Right ventricle myocardium inferior (tissue), 1 donor: ENCODE measurements at regions of chr3 and their contacts with region 1.

Region 1: DNA sequence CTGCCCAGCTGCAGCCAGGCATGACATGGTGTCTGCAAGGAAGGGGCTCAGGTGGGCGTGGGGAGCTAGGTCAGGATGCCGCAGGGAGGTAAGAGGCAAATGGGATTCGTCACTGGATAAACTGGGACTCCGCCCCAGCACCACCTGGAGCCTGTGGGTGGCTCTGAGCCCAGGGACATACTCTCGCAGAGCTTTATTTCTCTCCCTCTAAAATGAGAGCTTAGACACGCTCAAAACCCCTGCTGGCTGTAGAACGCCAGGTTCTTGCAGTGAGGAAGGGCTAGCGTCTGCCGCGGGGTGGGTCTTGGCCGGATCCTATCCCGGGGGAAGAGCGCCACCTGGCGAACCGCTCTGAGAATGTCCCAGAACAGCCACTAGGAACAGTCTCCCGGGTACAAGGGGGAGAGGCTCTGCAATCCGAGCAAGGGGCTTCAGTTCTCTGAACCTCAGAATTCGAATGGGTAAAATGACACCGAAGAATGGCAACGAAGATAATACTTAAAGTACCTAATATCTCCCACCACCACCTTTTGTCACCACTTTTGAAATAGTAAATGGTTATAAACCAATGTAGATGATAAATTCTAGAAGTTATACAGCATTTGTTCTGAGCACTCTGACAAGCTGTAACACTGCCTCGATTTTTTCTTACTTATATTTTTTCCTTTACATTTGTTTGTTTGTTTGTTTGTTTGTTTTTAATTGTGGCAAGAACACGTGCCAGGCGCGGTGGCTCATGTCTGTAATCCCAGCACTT is 53.2 kb upstream of the SRGAP3 start:
- DNase-seq: peak; percentile 88
- ATAC-seq: peak; percentile 94

Region 2: GRCh38 chr3:8970971-8971589 is 331.5 kb before region 1 on chr3:
- intact Hi-C with region 1: loop called (anchors 1 kb)
- DNase-seq: no peak
- ATAC-seq: peak; percentile 59

Region 3: DNA sequence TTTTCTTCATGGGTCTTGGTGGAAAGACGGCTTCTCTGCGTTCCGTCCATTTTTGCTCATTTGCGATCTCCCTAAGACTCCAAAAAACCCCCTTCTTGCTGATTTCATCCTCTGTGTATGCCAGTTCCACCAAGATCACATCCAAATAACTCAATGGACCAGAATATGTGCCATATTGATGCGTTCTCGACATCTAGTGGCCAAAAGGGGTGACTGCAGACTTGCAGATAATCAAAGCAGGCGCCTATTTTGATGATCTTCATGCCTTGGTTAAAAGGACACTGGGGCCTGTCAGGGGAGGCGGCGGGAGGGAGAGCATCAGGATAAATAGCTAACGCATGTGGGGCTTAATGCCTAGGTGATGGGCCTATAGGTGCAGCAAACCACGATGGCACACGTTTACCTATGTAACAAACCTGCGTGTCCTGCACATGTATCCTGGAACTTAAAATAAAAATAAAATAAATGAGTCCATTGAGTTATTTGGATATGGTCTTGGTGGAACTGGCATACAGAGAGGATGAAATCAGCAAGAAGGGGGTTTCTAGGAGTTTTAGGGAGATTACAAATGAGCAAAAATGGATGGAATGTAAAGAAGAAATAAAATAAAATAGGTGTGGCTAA is 235.1 kb before region 1 on chr3:
- intact Hi-C with region 1: loop called (anchors 5 kb)
- DNase-seq: no peak
- ATAC-seq: peak; percentile 85

Region 4: GRCh38 chr3:9249273-9250192 is 53.1 kb before region 1 on chr3 and contains the start of gene SRGAP3:
- intact Hi-C with region 1: no loop called
- DNase-seq: peak; percentile 89
- ATAC-seq: peak; percentile 98
- total RNA-seq, gene SRGAP3: 6.1 TPM

Region 5: GRCh38 chr3:9563851-9564250 is 261.2 kb after region 1 on chr3:
- intact Hi-C with region 1: no loop called
- DNase-seq: no peak
- ATAC-seq: no peak